Heart left ventricle (tissue), 16 donors: ENCODE measurements at regions of chr3 and their contacts with region 1.

Region 1: DNA sequence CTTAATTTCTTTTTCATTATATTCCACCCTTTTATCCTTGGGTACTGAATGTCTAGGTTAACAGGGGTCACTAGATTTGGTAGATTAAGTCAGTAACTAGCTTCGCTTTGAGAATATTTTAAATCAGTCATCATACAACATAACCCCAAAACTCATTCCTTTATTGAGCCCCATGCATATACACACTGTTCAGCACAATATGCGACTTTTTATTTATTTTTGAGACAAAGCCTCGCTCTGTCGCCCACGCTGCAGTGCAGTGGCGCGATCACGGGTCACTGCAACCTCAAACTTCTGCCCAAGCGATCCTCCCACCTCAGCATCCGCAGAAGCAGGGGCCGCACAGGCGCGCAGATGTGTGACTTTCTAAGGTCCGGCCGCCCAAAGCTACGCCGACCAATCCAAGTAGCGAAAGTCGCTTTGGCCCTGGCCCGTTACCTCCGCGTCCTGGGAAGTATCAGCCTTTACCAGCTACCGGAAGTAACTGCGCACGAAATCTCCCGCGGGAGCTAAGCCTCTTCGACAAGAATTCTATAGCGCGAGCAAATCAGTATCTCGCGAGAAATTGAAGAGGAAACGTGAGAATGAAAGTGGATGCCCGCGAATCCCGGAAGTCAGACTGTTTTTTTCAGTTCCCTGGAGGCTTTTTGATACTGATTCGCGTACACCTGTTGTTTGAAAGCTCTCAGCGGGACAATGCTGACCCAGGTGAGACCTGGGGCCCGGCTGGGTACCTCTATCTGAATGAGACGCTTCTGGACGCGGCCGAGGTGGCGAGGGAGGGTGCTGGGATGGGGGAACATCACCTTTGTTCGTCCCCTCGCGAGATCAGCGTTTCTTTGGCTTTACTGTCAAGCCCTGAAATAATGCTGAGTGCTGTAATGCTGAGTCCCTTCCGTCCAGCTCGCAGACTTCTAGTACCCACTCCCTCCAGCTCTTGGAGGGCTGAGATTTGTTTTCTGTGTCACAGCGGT is at the starts of genes DHFR2 and NSUN3:
- DNase-seq: peak; percentile 91 to 95 (median 93)
- ATAC-seq: peak; percentile 91 to 98 (median 97)
- H3K4me3 ChIP-seq: peak within 1 kb of the TSS; percentile 40 to 85 (median 72)
- H3K27ac ChIP-seq: peak within 1 kb of the TSS; percentile 79 to 99 (median 90)
- H3K4me1 ChIP-seq: peaks cover 3 to 43% (median 20%) of the 10 kb centered on the region in 12 donors
- H3K27me3 ChIP-seq: no peaks in the 10 kb centered on the region
- CTCF ChIP-seq: no peak
- POLR2A ChIP-seq: peak in 1 of 2 donors; percentile 55
- total RNA-seq, gene DHFR2: 1.6 to 5.4 (median 3.7) TPM
- total RNA-seq, gene NSUN3: 4.1 to 11.2 (median 7.5) TPM

Region 2: GRCh38 chr3:94004301-94004910 is 58.3 kb before region 1 on chr3:
- intact Hi-C with region 1: loop called in 6 of 10 experiments (anchors 2 to 5 kb)
- DNase-seq: no peak
- ATAC-seq: peak; percentile 36 to 81 (median 74)
- H3K4me3 ChIP-seq: peak overlapping the region in 10 of 12 donors; percentile 25 to 44 (median 36)
- H3K27ac ChIP-seq: peak overlapping the region in 2 of 12 donors; percentile 31 to 41
- H3K4me1 ChIP-seq: peaks cover 0 to 14% (median 1%) of the 10 kb centered on the region in 12 donors
- H3K27me3 ChIP-seq: no peaks in the 10 kb centered on the region
- CTCF ChIP-seq: peak; percentile 61 to 89 (median 79)
- POLR2A ChIP-seq: no peak

Region 3: GRCh38 chr3:94028093-94028833 is 34.5 kb before region 1 on chr3 and contains the start of gene STX19:
- intact Hi-C with region 1: loop called in 1 of 10 experiments (anchors 5 kb)
- DNase-seq: no peak
- ATAC-seq: no peak
- H3K4me3 ChIP-seq: peak within 1 kb of the TSS in 6 of 12 donors; percentile 13 to 40 (median 24)
- H3K27ac ChIP-seq: no peak within 1 kb of the TSS
- H3K4me1 ChIP-seq: peaks cover 0 to 14% (median 0%) of the 10 kb centered on the region in 12 donors
- H3K27me3 ChIP-seq: no peaks in the 10 kb centered on the region
- CTCF ChIP-seq: no peak
- POLR2A ChIP-seq: no peak
- total RNA-seq, gene STX19: 0.25 TPM in 1 of 9 donors, not detected in the others